HEK293 (cell line): ENCODE measurements at regions of chr17 and their contacts with region 1.

Region 1: GRCh38 chr17:66715745-66716156 is 119.2 kb upstream of the CACNG5 start:
- H3K4me3 ChIP-seq: no peak overlapping the region
- H3K27ac ChIP-seq: no peak overlapping the region
- H3K4me1 ChIP-seq: peaks cover 10% of the 10 kb centered on the region
- CTCF ChIP-seq: peak; percentile 75

Region 2: GRCh38 chr17:66643815-66644702 is 71.7 kb before region 1 on chr17:
- CTCF ChIA-PET with region 1: no interaction called
- POLR2A ChIA-PET with region 1: no interaction called
- H3K4me3 ChIP-seq: no peak overlapping the region
- H3K27ac ChIP-seq: no peak overlapping the region
- H3K4me1 ChIP-seq: no peaks in the 10 kb centered on the region
- CTCF ChIP-seq: no peak

Region 3: DNA sequence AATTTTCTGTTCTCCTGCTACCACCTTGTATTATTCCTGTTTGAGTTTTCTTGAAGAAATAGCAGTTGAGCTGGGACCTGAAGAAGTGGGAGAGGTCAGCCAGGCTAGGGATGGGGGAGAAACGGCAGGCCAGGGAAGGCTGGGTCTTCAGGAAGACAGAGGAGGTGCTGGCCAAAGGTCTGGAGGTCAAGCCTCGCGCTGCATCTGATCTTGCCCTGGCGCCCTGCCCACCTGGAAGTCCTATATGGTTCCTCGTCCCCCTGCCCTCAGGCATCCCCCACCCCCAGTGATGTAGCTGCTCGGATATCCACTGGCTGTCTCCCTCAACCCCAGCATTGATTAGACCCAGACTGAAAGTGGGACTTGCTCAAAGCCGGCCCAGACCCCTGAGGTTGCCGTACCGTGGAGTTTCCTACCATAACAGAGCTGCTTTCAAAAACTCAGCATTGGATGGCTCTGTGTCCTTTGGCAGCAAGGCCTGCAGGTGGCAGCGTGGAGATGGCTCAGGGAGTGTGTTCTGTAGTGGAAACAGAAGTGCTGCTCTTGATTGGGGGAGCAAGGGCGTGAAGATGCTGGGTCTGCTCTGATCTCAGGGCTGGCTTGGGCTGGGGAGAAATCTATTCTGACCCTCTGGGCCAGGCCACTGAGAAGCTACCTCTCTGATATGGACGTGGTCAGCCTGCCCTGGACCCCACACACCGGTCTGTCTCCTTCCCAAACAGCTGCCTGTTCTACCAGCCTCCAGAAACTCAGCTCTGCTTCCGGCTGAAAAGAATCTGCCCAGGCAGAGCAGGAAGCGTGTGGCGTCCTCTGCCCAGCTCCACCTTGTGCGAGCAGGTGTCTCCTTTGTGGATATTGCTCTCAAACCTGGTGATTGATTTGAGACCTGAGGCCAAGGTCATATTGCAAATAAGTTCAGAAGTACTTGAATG is 12.2 kb after region 1 on chr17:
- CTCF ChIA-PET with region 1: interaction called, 11 read pairs
- POLR2A ChIA-PET with region 1: no interaction called
- H3K4me3 ChIP-seq: no peak overlapping the region
- H3K27ac ChIP-seq: no peak overlapping the region
- H3K4me1 ChIP-seq: peaks cover 11% of the 10 kb centered on the region
- CTCF ChIP-seq: peak; percentile 64

Region 4: DNA sequence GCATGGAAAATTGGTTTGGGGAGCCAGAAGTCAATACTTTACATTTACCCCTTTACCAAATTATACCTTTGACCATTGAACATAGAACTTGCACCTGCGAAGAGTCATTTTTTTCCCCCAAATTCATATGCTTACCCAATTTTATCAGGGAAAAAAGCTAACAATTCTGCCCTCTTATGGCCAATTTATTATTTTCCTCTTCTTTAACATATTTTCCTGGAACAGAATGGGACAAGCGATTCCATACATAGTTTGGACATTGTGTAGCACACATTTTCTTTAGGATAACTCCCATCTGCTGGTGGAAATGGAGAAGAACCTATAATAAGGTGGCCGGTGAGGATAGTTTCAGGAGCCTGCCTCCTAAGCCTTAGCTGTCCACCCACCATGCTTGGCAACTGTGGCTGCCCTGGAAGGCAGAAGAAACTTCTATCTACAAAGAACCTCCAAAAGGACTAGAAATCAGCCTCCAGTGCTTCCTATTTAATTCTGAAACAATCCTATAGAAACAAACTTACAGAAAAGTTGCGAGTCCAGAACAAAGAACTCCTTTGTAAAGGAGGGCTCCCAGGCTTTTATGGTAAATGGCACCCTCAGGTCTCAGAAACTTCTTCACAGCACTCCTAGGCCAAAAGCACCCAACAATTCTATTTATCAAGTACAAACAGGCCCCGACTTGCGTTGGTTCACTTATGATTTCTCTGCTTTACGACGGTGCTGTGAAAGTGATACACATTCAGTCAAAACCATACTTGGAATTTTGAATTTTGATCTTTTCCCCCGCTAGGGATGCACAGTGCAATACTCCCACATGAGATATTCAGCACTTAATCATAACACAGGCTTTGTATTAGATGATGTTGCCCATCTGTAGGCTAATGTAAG is 184.6 kb after region 1 on chr17:
- CTCF ChIA-PET with region 1: interaction called, 22 read pairs
- POLR2A ChIA-PET with region 1: no interaction called
- H3K4me3 ChIP-seq: no peak overlapping the region
- H3K27ac ChIP-seq: no peak overlapping the region
- H3K4me1 ChIP-seq: no peaks in the 10 kb centered on the region; the same call in 1 of the 2 replicates
- CTCF ChIP-seq: peak; percentile 29; the same call in 1 of the 2 replicates

Region 5: DNA sequence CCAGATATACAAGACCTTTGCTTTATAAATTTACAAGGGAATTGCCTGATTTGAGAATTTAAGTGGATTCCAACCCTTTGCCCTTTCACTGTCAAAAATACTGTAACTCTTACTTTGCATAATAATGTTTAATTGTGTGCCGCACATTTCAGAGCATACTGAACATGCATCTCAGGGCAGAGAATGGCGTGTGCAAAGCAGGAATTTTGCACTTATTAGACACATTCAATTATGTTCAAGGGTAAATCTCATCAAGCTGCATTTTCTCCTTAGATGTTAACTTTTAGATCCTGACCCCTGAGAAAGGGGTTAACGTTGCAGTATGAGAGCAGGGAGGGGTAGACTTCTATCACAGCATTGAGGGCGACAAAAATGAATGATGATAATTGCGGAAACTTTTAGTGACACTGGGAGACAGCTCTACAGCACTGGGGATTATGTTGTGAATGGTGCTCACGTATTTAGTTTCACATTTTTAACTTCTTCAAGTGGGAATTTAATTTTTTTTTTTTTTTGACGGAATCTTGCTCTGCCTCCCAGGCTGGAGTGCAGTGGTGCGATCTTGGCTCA is 194.1 kb after region 1 on chr17:
- CTCF ChIA-PET with region 1: interaction called, 12 read pairs
- POLR2A ChIA-PET with region 1: no interaction called
- H3K4me3 ChIP-seq: no peak overlapping the region
- H3K27ac ChIP-seq: no peak overlapping the region
- H3K4me1 ChIP-seq: no peaks in the 10 kb centered on the region; the same call in 1 of the 2 replicates
- CTCF ChIP-seq: no peak

Region 6: DNA sequence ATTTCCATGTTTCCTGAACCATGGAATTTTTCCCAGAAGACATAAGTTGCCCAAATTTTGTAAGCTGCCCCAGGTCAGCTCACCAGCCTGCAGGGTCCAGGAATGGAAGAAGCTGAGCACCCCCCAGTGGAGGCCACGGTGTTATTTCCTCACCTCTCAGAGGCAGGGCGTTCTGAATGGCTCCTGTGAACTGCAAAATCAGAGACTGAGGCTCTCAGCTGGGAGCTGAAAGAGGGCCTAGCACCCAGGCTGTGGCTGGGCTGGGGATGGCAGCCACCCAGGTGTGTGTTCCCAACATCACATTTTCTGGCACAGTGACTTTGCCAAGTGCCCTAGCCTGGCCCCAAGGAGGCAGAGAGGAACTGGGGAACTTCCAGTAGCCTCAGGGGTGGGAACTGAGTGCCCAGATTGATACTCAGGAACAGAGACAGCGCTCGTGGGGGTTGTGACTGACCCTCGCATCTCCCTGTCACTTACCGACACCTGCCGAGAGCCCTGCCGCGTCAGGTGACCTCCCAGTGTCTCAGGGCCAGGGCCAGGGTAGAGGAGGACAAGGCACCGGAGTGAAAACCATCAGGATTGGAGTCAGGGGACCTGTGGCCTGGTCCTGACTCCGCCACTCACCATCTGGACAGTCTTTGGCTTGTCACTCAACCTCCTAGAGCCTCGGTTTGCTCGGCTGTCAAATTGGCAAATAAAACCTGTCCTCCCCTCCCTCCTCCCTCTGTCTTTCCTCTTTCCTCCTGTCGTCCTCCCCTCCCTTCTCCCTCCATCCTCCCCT is 260.0 kb after region 1 on chr17:
- CTCF ChIA-PET with region 1: interaction called, 10 read pairs
- POLR2A ChIA-PET with region 1: no interaction called
- H3K4me3 ChIP-seq: no peak overlapping the region
- H3K27ac ChIP-seq: no peak overlapping the region
- H3K4me1 ChIP-seq: no peaks in the 10 kb centered on the region
- CTCF ChIP-seq: 0 out of 2 replicates have a peak, but pooled peaks have one; percentile 32